ENCODE measurements at regions of chr22 and their contacts with region 1.

Region 1: DNA sequence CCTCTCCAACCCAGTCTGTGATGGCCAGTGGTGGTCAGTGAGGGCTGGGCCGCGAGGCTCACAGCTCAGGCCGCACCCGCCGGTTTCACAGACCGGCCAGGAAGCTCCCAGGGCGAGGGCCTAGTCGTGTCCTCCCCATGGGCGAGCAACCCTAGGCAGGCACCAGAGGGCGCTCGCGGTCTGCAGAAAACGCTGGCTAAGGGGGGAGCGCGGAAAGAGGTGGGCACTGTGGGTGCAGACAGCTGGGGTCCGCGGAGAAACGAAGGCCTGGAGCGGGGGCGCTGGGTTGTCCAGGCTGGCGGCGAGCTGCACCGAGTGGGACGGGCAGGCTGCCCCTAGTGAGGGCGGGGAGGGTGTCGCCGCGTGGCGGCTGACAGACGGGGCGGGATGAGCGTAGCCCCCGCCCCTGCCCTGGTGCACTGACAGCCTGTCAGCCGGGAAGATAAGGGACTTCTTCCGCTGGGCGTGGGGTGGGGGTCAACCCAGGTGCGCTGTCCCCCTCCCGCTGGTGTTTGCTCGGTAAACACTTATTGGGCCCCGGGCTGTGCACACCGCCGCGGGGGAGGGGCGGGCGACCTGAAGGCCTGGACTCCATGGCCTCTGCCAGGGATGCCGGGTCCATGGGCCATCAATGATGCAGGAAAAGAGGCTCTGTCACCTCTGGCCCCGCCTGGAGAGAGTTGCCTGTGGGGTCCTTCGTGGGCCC is 7.5 kb downstream of the GP1BB start:
- DNase-seq: peak; percentile 59
- H3K27ac ChIP-seq: peak overlapping the region; percentile 14; the same call in 1 of the 2 replicates
- CTCF ChIP-seq: peak; percentile 93

Region 2: GRCh38 chr22:19837915-19838314 is 107.1 kb after region 1 on chr22:
- CTCF ChIA-PET with region 1: no interaction called
- POLR2A ChIA-PET with region 1: no interaction called
- DNase-seq: no peak
- H3K27ac ChIP-seq: no peak overlapping the region
- CTCF ChIP-seq: no peak

Region 3: DNA sequence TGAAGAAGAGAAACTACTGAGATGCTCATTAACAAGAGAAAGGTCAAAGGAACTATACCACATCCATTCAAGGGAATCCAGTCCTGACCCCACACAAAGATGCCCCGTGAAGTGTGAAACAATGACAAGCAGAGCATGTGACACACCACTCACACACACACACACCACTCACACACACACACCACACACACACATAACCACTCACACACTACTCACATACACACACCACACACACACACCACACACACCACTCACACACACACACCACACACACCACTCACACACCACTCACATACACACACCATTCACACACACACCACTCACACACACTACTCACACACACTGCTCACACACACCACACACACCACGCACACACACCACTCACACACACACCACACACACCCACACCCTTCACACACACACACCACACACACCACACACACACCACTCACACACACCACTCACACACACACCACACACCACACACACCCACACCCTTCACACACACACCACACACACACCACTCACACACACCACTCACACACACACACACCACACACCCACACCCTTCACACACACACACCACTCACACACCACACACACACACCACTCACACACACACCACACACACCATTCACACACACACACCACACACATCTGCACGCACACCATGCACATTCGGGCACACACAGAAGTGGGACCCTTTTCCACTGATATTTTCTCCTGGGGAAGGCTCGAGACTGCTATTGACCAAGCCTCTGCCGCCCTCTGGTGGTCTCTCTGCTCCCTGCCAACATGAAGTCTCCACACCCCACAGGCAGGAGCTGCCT is 178.8 kb after region 1 on chr22:
- CTCF ChIA-PET with region 1: interaction called, 39 read pairs
- POLR2A ChIA-PET with region 1: no interaction called
- DNase-seq: peak; percentile 72
- H3K27ac ChIP-seq: peak overlapping the region; percentile 55
- CTCF ChIP-seq: peak; percentile 88